ENCODE measurements at regions of chr22 and their contacts with region 1.

Region 1: DNA sequence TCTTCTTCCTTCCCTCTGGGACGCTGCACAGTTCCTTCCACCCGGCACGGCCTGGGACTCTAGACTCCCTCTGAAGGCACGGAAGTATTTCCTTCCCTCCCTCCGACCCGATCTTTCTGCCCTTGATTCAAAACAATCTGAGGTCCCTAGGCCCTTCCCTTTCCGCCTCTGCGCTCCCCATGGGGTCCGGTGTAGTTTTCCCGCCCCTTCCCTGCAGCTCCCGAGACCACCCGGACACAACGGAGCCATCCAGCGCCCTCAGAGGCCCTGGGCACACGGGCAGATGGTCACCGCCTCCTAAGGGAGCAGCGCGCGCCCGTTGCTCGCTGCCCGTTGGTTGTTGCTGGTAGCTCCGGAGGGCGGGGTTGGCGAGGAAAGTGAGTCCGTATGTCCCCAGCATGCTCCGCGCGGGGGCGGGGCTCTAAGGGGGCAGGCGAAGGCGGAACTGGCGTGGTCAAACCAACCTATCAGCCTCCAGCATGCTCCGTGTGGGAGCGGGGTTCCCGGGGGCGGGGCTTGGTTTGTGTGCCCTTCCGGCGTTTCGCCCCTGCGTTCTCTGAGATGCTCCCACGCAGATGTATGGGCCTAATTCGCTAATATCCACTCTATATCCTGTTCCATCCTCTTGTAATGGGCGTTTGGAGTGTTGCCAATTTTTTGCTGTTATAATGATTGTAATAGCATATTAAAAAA is 19.6 kb downstream of the MIF start:
- DNase-seq: peak; percentile 99
- H3K4me3 ChIP-seq: peak overlapping the region; percentile 59
- H3K27ac ChIP-seq: peak overlapping the region in 1 of 2 donors; percentile 75
- H3K4me1 ChIP-seq: peaks cover 6% of the 10 kb centered on the region
- H3K27me3 ChIP-seq: no peaks in the 10 kb centered on the region
- CTCF ChIP-seq: no peak
- EP300 ChIP-seq: peak; percentile 62
- POLR2A ChIP-seq: peak; percentile 78

Region 2: DNA sequence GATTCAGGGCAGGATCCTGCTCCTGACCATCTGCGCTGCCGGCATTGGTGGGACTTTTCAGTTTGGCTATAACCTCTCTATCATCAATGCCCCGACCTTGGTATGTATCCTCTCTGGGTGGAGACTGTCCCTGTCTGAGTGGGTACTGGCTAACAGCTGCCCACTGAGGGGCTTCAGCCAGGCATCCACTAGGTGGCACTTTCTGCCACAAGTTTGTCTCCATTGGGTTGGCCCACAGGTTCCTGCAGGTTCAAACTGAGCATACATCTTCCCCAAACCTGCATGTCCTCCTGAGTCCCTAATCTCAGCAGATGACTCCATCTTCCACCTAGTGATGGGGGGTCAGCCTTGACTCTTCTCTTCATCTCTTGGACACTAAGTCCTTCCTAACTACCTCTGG is 51.7 kb before region 1 on chr22:
- intact Hi-C with region 1: loop called in 1 of 4 experiments (anchors 10 kb)
- DNase-seq: peak in 2 of 5 donors; percentile 28 to 45
- H3K4me3 ChIP-seq: no peak overlapping the region
- H3K27ac ChIP-seq: no peak overlapping the region
- H3K4me1 ChIP-seq: no peaks in the 10 kb centered on the region
- H3K27me3 ChIP-seq: no peaks in the 10 kb centered on the region
- CTCF ChIP-seq: no peak
- EP300 ChIP-seq: no peak
- POLR2A ChIP-seq: no peak

Measured in ovary (tissue), 10 donors.